ENCODE measurements at regions of chr11 and their contacts with region 1.

Region 1: DNA sequence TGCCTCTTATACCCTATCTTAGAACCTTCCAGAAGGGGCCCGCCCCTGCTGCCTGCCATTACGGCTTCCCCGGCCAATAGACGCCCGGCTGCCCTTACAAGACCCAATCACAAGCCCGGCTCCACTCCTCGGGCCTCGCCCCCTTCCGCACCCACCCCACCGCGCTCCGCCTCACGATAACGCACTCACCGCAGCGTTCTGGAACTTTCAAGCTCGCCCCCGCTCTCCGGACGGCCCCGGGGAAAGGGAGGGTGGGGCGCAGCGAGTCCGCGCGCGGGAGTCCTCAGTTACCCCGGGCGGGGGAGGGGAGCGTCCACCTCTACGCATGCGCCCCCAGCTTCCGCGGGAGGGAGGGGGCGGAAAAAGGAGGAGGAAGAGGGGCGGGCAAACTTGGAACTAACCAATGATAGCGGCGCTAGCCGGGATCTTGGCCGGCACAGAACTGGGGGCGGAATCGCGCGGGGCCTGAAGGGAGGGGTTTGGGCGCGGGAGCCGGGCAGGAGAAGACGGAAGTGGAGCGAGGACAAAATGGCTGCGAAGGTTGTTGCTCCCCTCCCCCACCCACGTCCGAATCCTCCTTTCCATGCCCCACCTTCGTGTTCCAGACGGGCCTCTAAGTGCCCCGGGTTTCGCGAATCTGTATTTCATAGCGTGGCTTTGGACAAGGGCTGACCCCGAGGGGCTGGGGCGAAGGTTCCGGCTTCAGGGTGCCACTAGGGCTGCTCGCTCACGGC is 389 bp upstream of the HSPA8 start:
- DNase-seq: peak; percentile 97 to 100 (median 99)
- ATAC-seq: peak; percentile 84
- H3K4me3 ChIP-seq: peak overlapping the region; percentile 89
- H3K4me3 Mint-ChIP-seq: peak overlapping the region; percentile 91
- H3K27ac ChIP-seq: peak overlapping the region; percentile 100
- H3K27ac Mint-ChIP-seq: peak overlapping the region; percentile 98
- H3K4me1 ChIP-seq: peaks cover 68% of the 10 kb centered on the region
- H3K4me1 Mint-ChIP-seq: peaks cover 75% of the 10 kb centered on the region
- H3K27me3 ChIP-seq: no peaks in the 10 kb centered on the region
- H3K27me3 Mint-ChIP-seq: no peaks in the 10 kb centered on the region
- CTCF ChIP-seq: no peak

Region 2: GRCh38 chr11:122882857-122883645 is 179.3 kb before region 1 on chr11:
- CTCF ChIA-PET with region 1: no interaction called
- POLR2A ChIA-PET with region 1: interaction called, 11 read pairs
- intact Hi-C with region 1: loop called in 1 of 2 experiments (anchors 2 kb)
- DNase-seq: peak; percentile 5 to 76 (median 48)
- ATAC-seq: peak; percentile 81
- H3K4me3 ChIP-seq: peak overlapping the region; percentile 78
- H3K4me3 Mint-ChIP-seq: peak overlapping the region; percentile 89
- H3K27ac ChIP-seq: peak overlapping the region; percentile 42 to 83
- H3K27ac Mint-ChIP-seq: peak overlapping the region; percentile 75
- H3K4me1 ChIP-seq: peaks cover 17% of the 10 kb centered on the region
- H3K4me1 Mint-ChIP-seq: peaks cover 38% of the 10 kb centered on the region
- H3K27me3 ChIP-seq: no peaks in the 10 kb centered on the region
- H3K27me3 Mint-ChIP-seq: no peaks in the 10 kb centered on the region
- CTCF ChIP-seq: no peak

Region 3: DNA sequence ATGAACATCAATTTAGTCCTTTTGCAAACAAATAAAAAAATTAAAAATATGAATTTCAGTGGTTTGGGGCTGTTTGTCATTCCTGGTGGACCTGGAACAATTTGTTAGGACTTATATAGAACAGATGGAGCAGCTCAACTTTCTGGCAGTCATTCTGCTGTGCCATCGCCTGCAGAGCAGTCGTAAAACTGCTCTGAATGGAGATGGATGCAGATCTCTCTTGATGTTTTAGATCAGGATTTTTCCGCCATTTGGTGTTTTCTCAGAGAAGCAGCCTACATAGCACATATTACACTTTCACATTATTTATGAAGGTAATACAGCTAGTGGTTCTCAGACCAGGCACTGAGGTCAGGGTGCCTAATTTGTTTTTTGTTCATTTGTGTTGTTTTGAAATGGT is 31.4 kb after region 1 on chr11:
- CTCF ChIA-PET with region 1: no interaction called
- POLR2A ChIA-PET with region 1: interaction called, 182 read pairs
- intact Hi-C with region 1: loop called in 1 of 2 experiments (anchors 5 kb)
- DNase-seq: no peak
- ATAC-seq: no peak
- H3K4me3 ChIP-seq: no peak overlapping the region
- H3K4me3 Mint-ChIP-seq: no peak overlapping the region
- H3K27ac ChIP-seq: no peak overlapping the region
- H3K27ac Mint-ChIP-seq: no peak overlapping the region
- H3K4me1 ChIP-seq: peaks cover 3% of the 10 kb centered on the region
- H3K4me1 Mint-ChIP-seq: peaks cover 11% of the 10 kb centered on the region
- H3K27me3 ChIP-seq: no peaks in the 10 kb centered on the region
- H3K27me3 Mint-ChIP-seq: no peaks in the 10 kb centered on the region
- CTCF ChIP-seq: no peak

Region 4: DNA sequence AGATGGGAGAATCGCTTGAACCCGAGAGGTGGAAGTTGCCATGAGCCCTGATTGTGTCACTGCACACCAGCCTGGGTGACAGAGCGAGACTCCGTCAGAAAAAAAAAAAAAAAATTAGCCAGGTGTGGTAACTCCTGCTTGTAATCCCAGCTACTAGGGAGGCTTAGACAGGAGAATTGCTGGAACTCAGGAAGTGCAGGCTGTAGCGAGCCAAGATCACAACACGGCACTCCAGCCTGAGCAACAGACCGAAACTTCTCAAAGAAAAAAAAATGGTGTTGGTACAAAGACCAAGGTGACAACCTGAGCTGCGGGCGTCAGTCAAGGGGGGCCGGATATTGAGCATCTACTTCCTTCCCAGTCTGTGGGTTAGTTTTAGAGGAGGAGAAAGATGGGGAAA is 48.0 kb after region 1 on chr11:
- CTCF ChIA-PET with region 1: no interaction called
- POLR2A ChIA-PET with region 1: interaction called, 226 read pairs
- intact Hi-C with region 1: no loop called
- DNase-seq: peak in 2 of 14 experiments; percentile 15 to 35
- ATAC-seq: no peak
- H3K4me3 ChIP-seq: no peak overlapping the region
- H3K4me3 Mint-ChIP-seq: peak overlapping the region; percentile 14
- H3K27ac ChIP-seq: no peak overlapping the region
- H3K27ac Mint-ChIP-seq: no peak overlapping the region
- H3K4me1 ChIP-seq: no peaks in the 10 kb centered on the region
- H3K4me1 Mint-ChIP-seq: no peaks in the 10 kb centered on the region
- H3K27me3 ChIP-seq: no peaks in the 10 kb centered on the region
- H3K27me3 Mint-ChIP-seq: no peaks in the 10 kb centered on the region
- CTCF ChIP-seq: no peak